MCF 10A (cell line): ENCODE measurements at regions of chr12 and their contacts with region 1.

Region 1: GRCh38 chr12:751192-751998 is 984 bp upstream of the WNK1 start:
- DNase-seq: peak; percentile 95
- H3K4me3 Mint-ChIP-seq: no peak overlapping the region
- H3K27ac Mint-ChIP-seq: no peak overlapping the region
- H3K4me1 Mint-ChIP-seq: peaks cover 11% of the 10 kb centered on the region
- H3K27me3 Mint-ChIP-seq: no peaks in the 10 kb centered on the region
- CTCF ChIP-seq: peak; percentile 49

Region 2: DNA sequence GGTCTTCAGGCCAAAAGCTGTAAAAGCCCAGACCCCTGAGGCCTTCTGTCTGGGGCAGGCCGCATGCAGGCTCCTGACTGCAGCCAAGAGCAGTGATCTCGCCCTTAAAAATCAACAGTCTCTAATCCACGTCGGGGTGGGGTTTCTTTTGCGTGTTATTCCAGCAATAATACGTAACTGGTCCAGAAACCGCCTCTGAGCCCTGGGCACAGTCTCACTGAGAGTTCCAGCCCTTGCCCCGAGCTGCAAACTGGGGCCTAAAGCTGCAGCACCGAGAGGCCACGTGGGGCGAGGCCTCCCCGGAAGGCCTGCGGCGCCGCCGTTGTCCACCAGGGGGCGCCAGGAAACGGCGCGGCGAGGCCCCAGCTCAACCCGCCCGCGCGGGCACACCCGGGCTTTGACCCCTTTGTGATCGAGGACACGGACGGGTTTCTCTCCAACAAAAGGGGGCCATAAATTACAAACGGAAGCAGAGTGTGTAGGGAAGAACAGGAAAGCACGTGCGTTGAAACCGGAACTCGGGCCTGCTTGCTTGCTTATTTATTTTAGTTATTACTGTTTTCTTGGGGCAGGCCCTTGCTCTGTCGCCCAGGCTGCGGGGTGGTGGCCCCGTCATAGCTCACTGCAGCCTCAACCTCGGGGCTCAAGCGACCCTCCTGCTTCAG is 175.3 kb before region 1 on chr12:
- CTCF ChIA-PET with region 1: interaction called, 100 read pairs
- POLR2A ChIA-PET with region 1: interaction called, 336 read pairs
- intact Hi-C with region 1: loop called (anchors 1 kb)
- DNase-seq: peak; percentile 78
- H3K4me3 Mint-ChIP-seq: peak overlapping the region; percentile 35
- H3K27ac Mint-ChIP-seq: peak overlapping the region; percentile 91
- H3K4me1 Mint-ChIP-seq: peaks cover 44% of the 10 kb centered on the region
- H3K27me3 Mint-ChIP-seq: no peaks in the 10 kb centered on the region
- CTCF ChIP-seq: peak; percentile 99

Region 3: GRCh38 chr12:712172-712863 is 39.1 kb before region 1 on chr12:
- CTCF ChIA-PET with region 1: no interaction called
- POLR2A ChIA-PET with region 1: interaction called, 14 read pairs
- intact Hi-C with region 1: no loop called
- DNase-seq: peak; percentile 11
- H3K4me3 Mint-ChIP-seq: no peak overlapping the region
- H3K27ac Mint-ChIP-seq: peak overlapping the region; percentile 35
- H3K4me1 Mint-ChIP-seq: peaks cover 11% of the 10 kb centered on the region
- H3K27me3 Mint-ChIP-seq: no peaks in the 10 kb centered on the region
- CTCF ChIP-seq: no peak

Region 4: DNA sequence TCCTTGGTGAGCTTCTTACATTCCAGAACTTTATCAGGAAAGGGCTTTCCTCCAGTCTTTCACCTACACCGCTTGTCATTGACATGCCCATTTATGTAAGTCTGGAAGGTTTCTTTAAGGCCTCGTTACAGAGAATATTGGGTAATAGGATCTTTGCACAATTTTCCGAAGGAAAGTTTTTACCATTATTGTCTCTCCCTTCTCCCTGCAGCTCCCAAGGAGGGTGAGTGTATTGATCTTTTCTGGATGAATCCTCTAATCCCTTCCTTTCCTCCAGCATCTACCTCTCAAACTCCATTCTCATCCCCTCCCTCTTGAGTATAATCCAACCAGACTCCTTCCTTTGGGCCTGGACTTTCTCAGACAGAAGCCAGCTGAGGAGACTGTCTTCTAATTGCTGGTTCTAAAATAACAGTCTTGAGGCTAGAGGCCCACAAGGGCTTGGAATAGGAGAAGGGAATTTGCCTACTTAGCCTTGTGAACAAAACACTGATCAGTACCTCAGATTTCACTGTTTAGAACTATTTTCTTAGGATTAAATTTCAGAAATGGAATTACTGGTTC is 22.7 kb after region 1 on chr12:
- CTCF ChIA-PET with region 1: interaction called, 42 read pairs
- POLR2A ChIA-PET with region 1: interaction called, 82 read pairs
- intact Hi-C with region 1: no loop called
- DNase-seq: peak; percentile 46
- H3K4me3 Mint-ChIP-seq: peak overlapping the region; percentile 6
- H3K27ac Mint-ChIP-seq: peak overlapping the region; percentile 77
- H3K4me1 Mint-ChIP-seq: peaks cover 21% of the 10 kb centered on the region
- H3K27me3 Mint-ChIP-seq: no peaks in the 10 kb centered on the region
- CTCF ChIP-seq: no peak

Region 5: DNA sequence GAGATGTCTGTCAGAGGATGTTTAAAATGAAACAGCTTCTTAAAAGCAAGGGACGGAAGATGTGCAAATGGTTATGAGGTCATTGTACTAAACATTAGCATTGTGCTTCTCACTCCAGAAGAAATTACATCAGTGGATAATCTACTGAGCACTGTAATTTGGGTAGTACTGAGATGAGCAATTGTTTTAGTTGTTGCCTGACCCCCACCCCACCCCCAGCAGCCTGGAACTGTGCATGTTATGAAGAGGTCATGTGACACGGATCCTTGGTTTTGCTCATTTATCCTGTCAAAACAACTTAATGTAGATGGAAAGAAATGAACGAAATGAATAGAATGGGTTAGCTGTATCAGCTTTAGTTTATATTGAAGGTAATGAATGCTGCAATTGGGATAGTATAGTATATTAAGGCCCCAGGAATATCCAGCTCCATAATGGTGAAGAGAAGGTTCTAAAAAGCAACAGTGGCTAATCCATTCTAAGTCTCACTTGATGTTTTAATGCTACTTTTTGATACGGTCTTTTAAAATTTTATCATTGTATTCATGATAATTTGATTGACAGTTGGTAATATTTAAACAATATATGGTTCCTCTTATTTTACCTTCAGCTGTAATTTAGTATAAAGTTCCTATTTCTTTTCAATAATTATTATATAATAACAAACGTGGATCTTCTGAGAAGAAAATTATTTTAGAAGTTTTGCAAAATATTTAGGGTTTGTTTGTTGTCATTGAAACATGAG is 59.4 kb after region 1 on chr12:
- CTCF ChIA-PET with region 1: interaction called, 35 read pairs
- POLR2A ChIA-PET with region 1: interaction called, 86 read pairs
- intact Hi-C with region 1: loop called (anchors 1 kb)
- DNase-seq: no peak
- H3K4me3 Mint-ChIP-seq: no peak overlapping the region
- H3K27ac Mint-ChIP-seq: no peak overlapping the region
- H3K4me1 Mint-ChIP-seq: peaks cover 27% of the 10 kb centered on the region
- H3K27me3 Mint-ChIP-seq: no peaks in the 10 kb centered on the region
- CTCF ChIP-seq: no peak

Region 6: DNA sequence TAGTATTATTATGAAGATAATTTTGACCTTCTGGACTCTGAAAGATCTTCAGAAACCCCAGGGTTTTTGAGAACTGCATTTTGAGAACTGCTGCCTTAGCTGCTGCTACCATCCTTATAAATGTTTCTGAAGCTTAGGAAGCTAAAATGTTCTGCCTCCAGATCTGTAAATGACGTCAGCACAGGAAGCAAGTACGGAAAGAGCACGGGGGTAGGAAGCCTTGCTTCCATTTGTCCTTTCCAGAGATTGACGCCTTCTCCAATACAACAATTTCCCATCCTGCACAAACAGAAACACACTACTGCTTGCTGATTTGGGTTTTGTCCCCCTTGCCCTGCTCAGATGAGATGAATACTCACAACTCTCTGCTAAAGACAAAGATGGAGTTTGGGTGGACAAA is 180.2 kb after region 1 on chr12:
- CTCF ChIA-PET with region 1: no interaction called
- POLR2A ChIA-PET with region 1: no interaction called
- intact Hi-C with region 1: no loop called
- DNase-seq: no peak
- H3K4me3 Mint-ChIP-seq: no peak overlapping the region
- H3K27ac Mint-ChIP-seq: no peak overlapping the region
- H3K4me1 Mint-ChIP-seq: no peaks in the 10 kb centered on the region
- H3K27me3 Mint-ChIP-seq: no peaks in the 10 kb centered on the region
- CTCF ChIP-seq: no peak

Region 7: DNA sequence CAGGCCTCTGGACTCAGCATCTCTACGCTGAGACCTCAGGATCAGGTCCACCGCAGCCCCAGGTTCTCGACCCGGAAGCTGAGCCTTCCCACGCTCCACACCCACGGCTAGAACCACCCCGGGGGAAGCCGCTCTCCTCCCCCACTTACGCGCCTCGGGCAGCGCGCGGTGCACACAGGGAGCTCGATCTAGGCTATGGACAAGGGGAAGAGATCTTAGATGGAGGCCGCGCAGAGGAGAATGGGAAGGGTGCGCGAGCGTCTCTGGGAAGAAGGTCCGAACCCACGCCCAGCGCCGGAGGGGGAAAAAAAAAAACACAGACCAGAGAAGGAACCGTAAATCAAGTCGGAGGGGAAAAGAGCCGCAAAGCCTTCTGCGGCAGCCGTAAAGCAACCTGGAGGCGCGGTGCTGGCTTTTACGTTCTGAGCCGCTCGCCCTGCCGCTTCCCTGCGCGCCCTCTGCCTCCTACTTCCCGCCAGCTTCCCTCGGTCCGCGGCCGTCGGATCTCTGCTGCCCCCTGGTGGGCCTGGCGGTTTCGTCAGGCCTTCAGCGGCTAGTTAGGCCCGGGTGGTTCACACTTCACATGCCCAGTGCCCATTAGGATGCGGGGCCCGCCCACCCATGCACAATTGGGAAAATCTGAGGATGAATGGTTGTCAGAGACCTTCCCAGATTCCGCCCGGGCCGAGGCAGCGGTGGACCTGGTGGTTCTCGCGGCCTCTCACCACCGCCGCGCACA is 198.2 kb after region 1 on chr12 and contains the start of gene RAD52:
- CTCF ChIA-PET with region 1: no interaction called
- POLR2A ChIA-PET with region 1: interaction called, 21 read pairs
- intact Hi-C with region 1: loop called (anchors 1 kb)
- DNase-seq: peak; percentile 98
- H3K4me3 Mint-ChIP-seq: peak within 1 kb of the TSS; percentile 96
- H3K27ac Mint-ChIP-seq: peak within 1 kb of the TSS; percentile 86
- H3K4me1 Mint-ChIP-seq: peaks cover 26% of the 10 kb centered on the region
- H3K27me3 Mint-ChIP-seq: no peaks in the 10 kb centered on the region
- CTCF ChIP-seq: peak; percentile 92
- total RNA-seq, gene RAD52: 26.0 and 27.9 TPM in 2 replicates